ENCODE measurements at regions of chr14 and their contacts with region 1.

Region 1: GRCh38 chr14:34227834-34228649 is 234.0 kb downstream of the SPTSSA start:
- DNase-seq: peak; percentile 19 to 67 (median 42)
- ATAC-seq: peak; percentile 49
- H3K4me3 ChIP-seq: no peak overlapping the region
- H3K4me3 Mint-ChIP-seq: no peak overlapping the region
- H3K27ac ChIP-seq: no peak overlapping the region
- H3K27ac Mint-ChIP-seq: no peak overlapping the region
- H3K4me1 ChIP-seq: peaks cover 3% of the 10 kb centered on the region
- H3K4me1 Mint-ChIP-seq: no peaks in the 10 kb centered on the region
- H3K27me3 ChIP-seq: no peaks in the 10 kb centered on the region
- H3K27me3 Mint-ChIP-seq: no peaks in the 10 kb centered on the region
- CTCF ChIP-seq: peak; percentile 65

Region 2: GRCh38 chr14:33475623-33476022 is 752.4 kb before region 1 on chr14:
- CTCF ChIA-PET with region 1: no interaction called
- POLR2A ChIA-PET with region 1: no interaction called
- intact Hi-C with region 1: loop called in 1 of 2 experiments (anchors 5 kb)
- DNase-seq: peak in 5 of 14 experiments; percentile 2 to 18 (median 12)
- ATAC-seq: no peak
- H3K4me3 ChIP-seq: no peak overlapping the region
- H3K4me3 Mint-ChIP-seq: no peak overlapping the region
- H3K27ac ChIP-seq: no peak overlapping the region
- H3K27ac Mint-ChIP-seq: no peak overlapping the region
- H3K4me1 ChIP-seq: no peaks in the 10 kb centered on the region
- H3K4me1 Mint-ChIP-seq: no peaks in the 10 kb centered on the region
- H3K27me3 ChIP-seq: no peaks in the 10 kb centered on the region
- H3K27me3 Mint-ChIP-seq: no peaks in the 10 kb centered on the region
- CTCF ChIP-seq: no peak

Region 3: GRCh38 chr14:34180460-34180868 is 47.6 kb before region 1 on chr14:
- CTCF ChIA-PET with region 1: no interaction called
- POLR2A ChIA-PET with region 1: no interaction called
- intact Hi-C with region 1: no loop called
- DNase-seq: no peak
- ATAC-seq: no peak
- H3K4me3 ChIP-seq: no peak overlapping the region
- H3K4me3 Mint-ChIP-seq: no peak overlapping the region
- H3K27ac ChIP-seq: no peak overlapping the region
- H3K27ac Mint-ChIP-seq: no peak overlapping the region
- H3K4me1 ChIP-seq: no peaks in the 10 kb centered on the region
- H3K4me1 Mint-ChIP-seq: peaks cover 3% of the 10 kb centered on the region
- H3K27me3 ChIP-seq: no peaks in the 10 kb centered on the region
- H3K27me3 Mint-ChIP-seq: no peaks in the 10 kb centered on the region
- CTCF ChIP-seq: no peak